ENCODE measurements at regions of chr5 and their contacts with region 1.

Region 1: DNA sequence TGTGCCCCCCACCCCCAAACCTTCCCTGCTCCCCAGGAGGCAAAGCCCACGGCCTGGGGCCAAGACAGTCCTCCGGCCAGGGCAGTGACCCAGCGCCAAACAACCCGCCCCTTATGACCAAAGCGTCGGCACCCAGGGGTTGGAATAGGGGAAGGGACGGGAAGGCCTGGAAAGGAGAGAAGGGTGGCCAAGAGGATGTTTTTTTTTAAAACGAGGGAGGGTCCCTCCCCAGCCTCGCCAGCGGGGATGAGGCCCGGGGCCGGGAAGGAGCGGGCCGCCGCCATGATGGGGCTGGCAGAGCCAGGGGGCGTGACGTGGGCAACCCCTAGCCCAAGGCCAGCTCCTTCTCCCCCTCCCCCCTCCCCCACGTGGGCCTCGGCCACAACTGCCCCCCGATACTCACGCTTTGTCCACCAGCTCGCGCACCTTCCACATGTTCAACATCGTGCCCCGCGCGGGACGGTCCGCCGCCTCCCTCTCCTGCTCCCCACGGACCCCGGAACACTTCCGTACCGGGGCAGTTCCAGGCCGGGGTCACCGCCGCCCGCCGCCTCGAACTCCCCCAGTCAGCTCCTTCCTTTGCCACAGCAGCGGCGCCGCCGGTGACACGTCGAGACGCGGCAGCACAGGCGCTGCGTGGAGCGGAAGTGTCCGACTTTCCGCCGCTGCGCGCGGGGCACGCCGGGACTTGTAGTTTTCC is at the start of gene CLINT1:
- DNase-seq: peak; percentile 98
- ATAC-seq: peak; percentile 96
- H3K4me3 ChIP-seq: peak within 1 kb of the TSS; percentile 93
- H3K27ac ChIP-seq: peak within 1 kb of the TSS; percentile 41
- H3K4me1 ChIP-seq: peaks cover 19% of the 10 kb centered on the region
- H3K27me3 ChIP-seq: no peaks in the 10 kb centered on the region
- CTCF ChIP-seq: no peak
- total RNA-seq, gene CLINT1: 125 and 131 TPM in 2 replicates

Region 2: GRCh38 chr5:157820593-157821252 is 38.0 kb before region 1 on chr5:
- CTCF ChIA-PET with region 1: interaction called, 7 read pairs
- POLR2A ChIA-PET with region 1: no interaction called
- intact Hi-C with region 1: loop called (anchors 1 kb)
- DNase-seq: peak; percentile 78
- ATAC-seq: peak; percentile 80
- H3K4me3 ChIP-seq: no peak overlapping the region
- H3K27ac ChIP-seq: no peak overlapping the region
- H3K4me1 ChIP-seq: peaks cover 6% of the 10 kb centered on the region
- H3K27me3 ChIP-seq: no peaks in the 10 kb centered on the region
- CTCF ChIP-seq: peak; percentile 92

Region 3: GRCh38 chr5:157917899-157918809 is 59.5 kb after region 1 on chr5:
- CTCF ChIA-PET with region 1: no interaction called
- POLR2A ChIA-PET with region 1: no interaction called
- intact Hi-C with region 1: loop called (anchors 1 kb)
- DNase-seq: peak; percentile 92
- ATAC-seq: peak; percentile 95
- H3K4me3 ChIP-seq: no peak overlapping the region
- H3K27ac ChIP-seq: no peak overlapping the region
- H3K4me1 ChIP-seq: 0 out of 2 replicates have a peak, but pooled peaks cover 3% of the 10 kb centered on the region
- H3K27me3 ChIP-seq: no peaks in the 10 kb centered on the region
- CTCF ChIP-seq: peak; percentile 92

Region 4: GRCh38 chr5:157994906-157995519 is 136.3 kb after region 1 on chr5:
- CTCF ChIA-PET with region 1: no interaction called
- POLR2A ChIA-PET with region 1: no interaction called
- intact Hi-C with region 1: loop called (anchors 1 kb)
- DNase-seq: peak; percentile 89
- ATAC-seq: peak; percentile 80
- H3K4me3 ChIP-seq: no peak overlapping the region
- H3K27ac ChIP-seq: no peak overlapping the region
- H3K4me1 ChIP-seq: peaks cover 28% of the 10 kb centered on the region
- H3K27me3 ChIP-seq: peaks cover 10% of the 10 kb centered on the region
- CTCF ChIP-seq: peak; percentile 96

Measured in PC-3 (cell line).